ENCODE measurements at regions of chr22 and their contacts with region 1.

Region 1: GRCh38 chr22:49929208-49930136 is 11.0 kb downstream of the CRELD2 start:
- DNase-seq: no peak
- H3K4me3 ChIP-seq: peak overlapping the region in 2 of 4 donors; percentile 27 to 58
- H3K27ac ChIP-seq: peak overlapping the region in 1 of 4 donors; percentile 6
- H3K4me1 ChIP-seq: peaks cover 33 to 59% (median 44%) of the 10 kb centered on the region in 3 donors
- H3K27me3 ChIP-seq: peaks cover 0 to 18% (median 0%) of the 10 kb centered on the region in 4 donors
- CTCF ChIP-seq: peak; percentile 60 to 99 (median 97)
- POLR2A ChIP-seq: no peak

Region 2: DNA sequence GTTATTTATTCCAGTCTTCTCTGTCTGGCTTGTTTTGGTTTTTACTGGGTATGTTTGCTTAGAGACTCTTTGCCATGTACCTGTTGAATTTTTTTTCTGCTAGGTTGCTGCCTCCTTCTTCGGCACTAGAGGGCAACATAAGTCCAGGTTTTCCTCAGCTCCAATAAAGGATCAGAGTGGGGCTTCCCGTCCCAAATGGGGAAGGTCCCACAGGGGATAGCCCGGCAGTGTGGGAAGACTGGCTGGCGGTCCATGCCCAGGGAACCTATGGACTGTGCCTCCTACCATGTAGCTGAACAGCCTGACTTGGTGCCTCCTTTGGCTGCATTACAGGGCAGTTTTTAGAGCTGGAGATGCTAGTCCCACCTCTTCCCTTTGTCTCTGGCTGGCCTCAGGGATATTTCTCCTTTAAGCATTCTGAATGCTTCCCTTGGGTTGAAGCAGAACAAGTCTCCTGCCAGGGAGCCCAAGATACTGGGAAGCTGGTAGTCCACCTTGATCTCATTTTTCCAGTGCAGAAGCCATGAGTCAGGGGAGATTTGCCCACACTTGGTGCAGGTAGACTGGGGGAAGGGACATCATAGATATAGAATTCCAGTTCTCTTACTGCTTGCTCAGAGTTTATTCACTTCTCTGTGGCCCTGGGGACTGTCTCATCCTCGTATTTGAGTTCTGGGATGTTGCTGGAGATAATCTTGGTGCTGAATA is 162.0 kb before region 1 on chr22:
- intact Hi-C with region 1: loop called (anchors 10 kb)
- DNase-seq: no peak
- H3K4me3 ChIP-seq: no peak overlapping the region
- H3K27ac ChIP-seq: no peak overlapping the region
- H3K4me1 ChIP-seq: peaks cover 0 to 13% (median 0%) of the 10 kb centered on the region in 3 donors
- H3K27me3 ChIP-seq: no peaks in the 10 kb centered on the region
- CTCF ChIP-seq: peak; percentile 25 to 78 (median 58)
- POLR2A ChIP-seq: no peak

Region 3: GRCh38 chr22:49970528-49971231 is 41.2 kb after region 1 on chr22:
- intact Hi-C with region 1: no loop called
- DNase-seq: peak; percentile 82
- H3K4me3 ChIP-seq: peak overlapping the region; percentile 37 to 71 (median 55)
- H3K27ac ChIP-seq: peak overlapping the region; percentile 85 to 100 (median 90)
- H3K4me1 ChIP-seq: peaks cover 46 to 69% (median 56%) of the 10 kb centered on the region in 3 donors
- H3K27me3 ChIP-seq: no peaks in the 10 kb centered on the region
- CTCF ChIP-seq: no peak
- POLR2A ChIP-seq: peak in 3 of 4 donors; percentile 74 to 91 (median 86)

Region 4: DNA sequence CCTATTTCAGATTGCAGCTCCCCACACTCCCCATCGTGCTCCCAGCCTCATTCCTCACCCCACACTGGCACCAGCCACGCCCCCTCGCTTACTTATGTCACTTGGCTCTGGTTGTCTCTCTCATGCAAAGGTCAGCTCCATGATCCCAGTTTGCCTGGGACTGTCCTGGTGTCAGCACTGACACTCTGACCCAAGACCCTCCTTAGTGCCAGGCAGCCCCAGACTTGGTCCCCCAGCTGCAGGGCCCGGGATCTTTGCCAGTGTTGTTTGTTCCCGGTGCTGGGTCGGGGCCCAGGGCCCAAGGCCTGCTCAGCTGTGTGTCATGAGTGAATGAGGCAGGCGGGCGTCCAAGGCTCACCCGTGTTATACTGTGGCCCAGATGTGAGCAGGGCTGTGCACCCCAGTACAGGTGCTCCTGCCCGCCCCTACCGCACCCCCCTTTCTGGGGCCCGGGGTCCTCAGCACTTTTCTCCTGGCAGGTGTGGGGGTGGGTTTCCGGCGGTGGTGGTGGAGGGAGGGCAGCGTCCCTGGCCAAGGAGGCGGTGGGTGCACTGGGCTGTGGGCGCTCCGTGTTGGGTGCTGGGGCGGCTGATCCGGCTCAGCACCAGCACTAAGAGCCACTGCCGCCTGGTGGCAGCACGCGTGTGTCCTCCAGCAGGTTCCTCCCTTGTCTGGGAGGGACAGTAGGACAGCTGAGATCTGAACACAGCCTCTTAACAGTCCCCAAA is 63.6 kb after region 1 on chr22:
- intact Hi-C with region 1: loop called (anchors 5 kb)
- DNase-seq: no peak
- H3K4me3 ChIP-seq: peak overlapping the region in 1 of 4 donors; percentile 14
- H3K27ac ChIP-seq: no peak overlapping the region
- H3K4me1 ChIP-seq: peaks cover 0 to 8% (median 3%) of the 10 kb centered on the region in 3 donors
- H3K27me3 ChIP-seq: peaks cover 0 to 13% (median 0%) of the 10 kb centered on the region in 4 donors
- CTCF ChIP-seq: peak; percentile 69 to 83 (median 74)
- POLR2A ChIP-seq: no peak

Region 5: DNA sequence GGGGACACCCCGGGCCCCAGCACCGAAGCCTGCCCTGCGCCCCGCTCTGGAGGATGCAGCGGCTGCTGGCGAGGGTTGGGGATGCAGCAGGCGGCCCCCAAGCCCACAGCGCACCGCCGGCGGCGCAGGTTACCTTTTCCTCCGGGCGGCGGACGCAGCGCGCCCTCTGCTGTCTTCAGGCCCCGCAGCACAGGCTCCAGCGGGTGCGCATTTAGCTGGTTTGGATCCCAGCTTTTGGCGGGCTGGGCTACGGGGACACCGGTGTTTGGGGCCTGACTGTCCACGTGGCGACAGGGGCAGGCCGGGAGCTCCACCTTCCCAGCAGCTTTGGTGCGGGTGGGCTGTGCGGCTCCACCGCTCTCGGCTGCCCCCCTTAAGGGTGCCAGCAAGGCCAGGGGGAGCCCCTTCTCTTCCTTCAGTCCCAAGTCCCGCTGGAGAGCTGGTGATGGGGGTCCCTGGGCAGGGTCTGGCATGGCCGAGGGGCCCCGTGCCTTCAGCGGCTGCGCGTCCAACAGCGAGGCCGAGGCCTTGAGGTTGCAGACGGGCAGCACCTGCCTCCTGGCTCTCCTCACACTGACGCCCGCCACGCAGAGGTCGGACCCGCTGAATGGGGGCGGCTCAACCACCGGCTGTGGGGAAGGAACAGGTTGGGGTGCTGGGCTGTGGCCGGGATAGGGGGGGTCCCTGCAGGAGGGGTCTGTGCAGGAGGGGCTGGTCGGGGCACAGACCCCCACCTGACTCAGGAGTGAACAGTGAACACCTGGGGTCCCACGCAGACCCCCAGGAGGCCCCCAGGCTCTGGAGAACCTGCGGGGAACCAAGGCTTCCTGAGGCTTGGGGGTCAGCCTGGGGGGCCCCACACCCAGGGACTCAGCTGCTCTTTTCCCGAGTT is 101.1 kb after region 1 on chr22:
- intact Hi-C with region 1: loop called (anchors 2 kb)
- DNase-seq: no peak
- H3K4me3 ChIP-seq: no peak overlapping the region
- H3K27ac ChIP-seq: no peak overlapping the region
- H3K4me1 ChIP-seq: peaks cover 5 to 24% (median 14%) of the 10 kb centered on the region in 3 donors
- H3K27me3 ChIP-seq: peaks cover 0 to 88% (median 0%) of the 10 kb centered on the region in 4 donors
- CTCF ChIP-seq: peak; percentile 72 to 94 (median 86)
- POLR2A ChIP-seq: no peak

Region 6: DNA sequence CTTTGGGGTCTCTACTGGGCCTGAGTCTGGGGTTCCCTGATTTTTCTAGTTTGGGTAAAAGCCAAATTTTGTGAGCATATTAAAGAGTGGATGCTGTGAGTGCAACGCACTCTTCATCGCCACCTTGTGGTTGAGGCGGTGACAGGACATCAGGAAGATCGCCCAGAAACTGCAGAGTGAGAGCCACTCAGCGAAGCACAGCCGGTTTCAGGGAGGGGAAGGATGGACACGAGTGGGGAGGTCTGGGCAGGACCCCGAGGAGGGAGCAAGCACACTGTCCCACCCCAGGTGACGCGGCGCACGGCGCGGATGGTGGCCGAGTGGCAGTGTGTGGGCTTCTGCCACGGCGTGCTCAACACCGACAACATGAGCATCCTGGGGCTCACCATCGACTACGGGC is 280.4 kb after region 1 on chr22:
- intact Hi-C with region 1: loop called (anchors 10 kb)
- DNase-seq: no peak
- H3K4me3 ChIP-seq: no peak overlapping the region
- H3K27ac ChIP-seq: no peak overlapping the region
- H3K4me1 ChIP-seq: peaks cover 0 to 47% (median 0%) of the 10 kb centered on the region in 3 donors
- H3K27me3 ChIP-seq: no peaks in the 10 kb centered on the region
- CTCF ChIP-seq: peak; percentile 75 to 89 (median 84)
- POLR2A ChIP-seq: no peak